ENCODE measurements at regions of chr2 and their contacts with region 1.

Region 1: DNA sequence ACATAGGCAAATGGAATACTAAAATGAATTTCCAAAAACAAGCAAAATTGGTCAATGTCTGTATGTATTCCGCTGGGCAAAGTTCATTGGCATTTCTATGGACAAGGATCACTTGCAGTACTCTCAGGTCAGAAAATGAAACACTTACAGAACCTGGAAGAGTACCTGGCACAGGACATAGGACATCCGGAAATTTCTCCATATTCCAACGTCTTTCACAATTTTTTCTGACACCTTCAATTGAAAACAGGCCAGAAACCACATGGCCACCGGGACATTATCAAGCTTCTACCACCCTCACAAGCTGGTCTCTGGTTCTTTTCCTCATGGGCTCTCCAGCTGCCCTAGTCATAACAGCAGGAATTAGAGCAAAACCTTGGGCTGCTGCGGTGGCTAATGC is 96.9 kb upstream of the MSH6 start:
- DNase-seq: no peak
- ATAC-seq: no peak
- H3K4me3 ChIP-seq: no peak overlapping the region
- H3K27ac ChIP-seq: no peak overlapping the region
- H3K4me1 ChIP-seq: 0 out of 2 replicates have a peak, but pooled peaks cover 4% of the 10 kb centered on the region
- H3K27me3 ChIP-seq: no peaks in the 10 kb centered on the region
- CTCF ChIP-seq: no peak

Region 2: GRCh38 chr2:47675196-47675825 is 10.7 kb before region 1 on chr2:
- CTCF ChIA-PET with region 1: interaction called, 11 read pairs
- POLR2A ChIA-PET with region 1: no interaction called
- intact Hi-C with region 1: no loop called
- DNase-seq: no peak
- ATAC-seq: no peak
- H3K4me3 ChIP-seq: no peak overlapping the region
- H3K27ac ChIP-seq: no peak overlapping the region
- H3K4me1 ChIP-seq: no peaks in the 10 kb centered on the region
- H3K27me3 ChIP-seq: no peaks in the 10 kb centered on the region
- CTCF ChIP-seq: no peak